ENCODE measurements at regions of chr1 and their contacts with region 1.

Region 1: DNA sequence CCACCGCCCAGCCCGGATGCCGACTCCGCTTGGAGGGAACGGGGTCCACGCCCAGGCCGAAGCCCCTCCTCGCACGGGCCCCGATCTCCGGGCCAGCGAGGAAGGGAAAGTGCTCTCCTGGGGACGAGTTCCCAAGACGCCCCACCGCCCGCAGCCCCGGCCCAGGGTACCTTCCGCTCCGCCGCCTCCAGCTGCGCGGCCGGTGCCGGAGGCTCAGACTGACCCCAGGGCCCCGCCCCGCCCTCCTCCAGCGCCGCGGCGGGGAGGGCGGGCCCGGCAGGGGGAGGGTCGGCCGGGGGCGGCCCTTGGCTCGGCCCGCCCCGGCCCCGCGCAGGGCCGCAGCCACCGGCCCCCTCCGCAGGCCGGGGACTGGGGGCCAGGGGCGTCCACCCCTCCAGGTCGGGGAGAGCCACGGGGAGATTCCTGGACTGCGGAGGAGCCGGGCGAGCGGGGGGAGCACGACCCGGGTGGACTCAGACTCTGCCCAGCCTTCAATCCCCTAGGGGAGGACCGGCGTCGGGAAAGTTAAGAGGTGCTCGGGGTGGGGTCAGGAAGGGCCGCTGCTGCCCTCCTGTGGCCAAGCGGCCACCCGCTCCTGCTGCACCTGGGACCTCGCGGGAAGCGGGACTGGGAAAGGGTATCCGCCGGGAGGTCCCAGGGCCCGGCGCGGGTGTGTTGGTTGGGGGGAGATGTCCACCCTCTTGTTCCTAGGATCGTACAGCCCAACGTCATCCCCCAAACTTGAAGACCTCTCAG is at the start of gene RHOC:
- DNase-seq: peak; percentile 75
- ATAC-seq: peak; percentile 82
- H3K4me3 ChIP-seq: peak within 1 kb of the TSS; percentile 87 to 90
- H3K27ac ChIP-seq: peak within 1 kb of the TSS; percentile 77
- H3K4me1 ChIP-seq: peaks cover 22 to 44% of the 10 kb centered on the region in 2 experiments
- H3K27me3 ChIP-seq: no peaks in the 10 kb centered on the region
- CTCF ChIP-seq: peak in 2 of 3 experiments; percentile 78 to 93; a peak in 4 of 6 replicates
- POLR2A ChIP-seq: no peak
- RAD21 ChIP-seq: no peak
- total RNA-seq, gene RHOC: 154 TPM

Region 2: DNA sequence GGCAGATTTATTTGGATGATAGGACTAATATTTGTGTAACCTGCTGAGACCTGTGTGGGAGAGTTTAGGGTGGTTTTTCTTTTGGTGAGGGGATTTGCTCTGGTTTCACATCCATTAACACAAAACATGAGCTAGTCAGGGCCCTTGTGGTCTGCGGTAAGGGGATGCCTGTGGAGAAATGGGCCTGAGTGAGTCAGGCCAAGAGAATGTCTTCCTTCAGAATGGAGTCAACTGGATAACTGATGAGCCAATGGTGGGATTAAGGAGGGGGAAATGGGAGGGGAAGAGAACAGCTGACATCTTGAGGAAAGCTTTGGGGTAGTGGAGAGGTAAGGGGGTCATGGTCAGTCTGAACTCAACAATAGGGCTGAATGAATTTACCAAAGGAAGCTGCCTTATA is 184.5 kb before region 1 on chr1:
- CTCF ChIA-PET with region 1: no interaction called
- POLR2A ChIA-PET with region 1: no interaction called
- RAD21 ChIA-PET with region 1: no interaction called
- intact Hi-C with region 1: loop called (anchors 10 kb)
- DNase-seq: no peak
- ATAC-seq: peak; percentile 73
- H3K4me3 ChIP-seq: no peak overlapping the region
- H3K27ac ChIP-seq: no peak overlapping the region
- H3K4me1 ChIP-seq: peaks cover 0 to 13% of the 10 kb centered on the region in 2 experiments; a peak in 1 of 4 replicates
- H3K27me3 ChIP-seq: no peaks in the 10 kb centered on the region
- CTCF ChIP-seq: no peak
- POLR2A ChIP-seq: no peak
- RAD21 ChIP-seq: no peak

Region 3: DNA sequence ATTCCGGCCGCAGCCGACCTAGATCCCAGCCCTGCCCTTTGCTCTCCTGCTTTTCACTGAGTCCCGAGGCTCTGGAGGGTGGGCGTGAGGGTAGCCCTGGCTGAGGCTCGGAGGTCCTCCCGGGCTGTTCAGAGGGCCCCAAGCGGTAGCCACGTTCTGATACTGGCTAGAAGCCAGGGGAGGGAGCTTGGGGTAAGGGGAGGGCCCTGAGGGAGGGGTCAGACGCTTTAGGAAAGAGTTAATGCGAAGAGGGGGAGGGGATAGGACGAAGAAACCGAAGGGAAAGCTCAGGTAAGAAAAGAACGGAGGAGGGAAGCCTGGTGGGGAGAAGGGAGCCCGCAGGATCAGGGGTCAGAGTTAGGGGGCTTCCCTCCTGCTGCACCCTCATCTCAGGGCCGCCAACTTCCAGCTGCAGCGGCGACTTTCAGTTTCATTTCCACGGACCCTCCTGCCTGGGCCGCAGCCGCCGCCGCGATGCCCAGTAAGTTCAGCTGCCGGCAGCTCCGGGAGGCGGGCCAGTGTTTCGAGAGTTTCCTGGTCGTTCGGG is 32.6 kb before region 1 on chr1 and contains the start of gene MOV10:
- CTCF ChIA-PET with region 1: interaction called, 5 read pairs
- POLR2A ChIA-PET with region 1: interaction called, 9 read pairs
- RAD21 ChIA-PET with region 1: no interaction called
- intact Hi-C with region 1: loop called (anchors 2 kb)
- DNase-seq: peak; percentile 59
- ATAC-seq: peak; percentile 79
- H3K4me3 ChIP-seq: peak within 1 kb of the TSS; percentile 71 to 72
- H3K27ac ChIP-seq: peak within 1 kb of the TSS; percentile 88
- H3K4me1 ChIP-seq: peaks cover 4 to 29% of the 10 kb centered on the region in 2 experiments; a peak in 3 of 4 replicates
- H3K27me3 ChIP-seq: no peaks in the 10 kb centered on the region
- CTCF ChIP-seq: no peak
- POLR2A ChIP-seq: no peak
- RAD21 ChIP-seq: no peak
- total RNA-seq, gene MOV10: 109 TPM

Measured in HCT116 (cell line).